Endothelial cell of umbilical vein (primary cell): ENCODE measurements at regions of chr21 and their contacts with region 1.

Region 1: GRCh38 chr21:34888569-34889319 is 160.4 kb downstream of the RUNX1 start:
- DNase-seq: peak; percentile 91
- H3K4me3 ChIP-seq: peak overlapping the region; percentile 59 to 89 (median 80)
- H3K27ac ChIP-seq: peak overlapping the region; percentile 88
- H3K4me1 ChIP-seq: peaks cover 36% of the 10 kb centered on the region
- H3K27me3 ChIP-seq: peaks cover 21 to 36% of the 10 kb centered on the region in 2 experiments
- CTCF ChIP-seq: no peak
- POLR2A ChIP-seq: peak; percentile 99

Region 2: DNA sequence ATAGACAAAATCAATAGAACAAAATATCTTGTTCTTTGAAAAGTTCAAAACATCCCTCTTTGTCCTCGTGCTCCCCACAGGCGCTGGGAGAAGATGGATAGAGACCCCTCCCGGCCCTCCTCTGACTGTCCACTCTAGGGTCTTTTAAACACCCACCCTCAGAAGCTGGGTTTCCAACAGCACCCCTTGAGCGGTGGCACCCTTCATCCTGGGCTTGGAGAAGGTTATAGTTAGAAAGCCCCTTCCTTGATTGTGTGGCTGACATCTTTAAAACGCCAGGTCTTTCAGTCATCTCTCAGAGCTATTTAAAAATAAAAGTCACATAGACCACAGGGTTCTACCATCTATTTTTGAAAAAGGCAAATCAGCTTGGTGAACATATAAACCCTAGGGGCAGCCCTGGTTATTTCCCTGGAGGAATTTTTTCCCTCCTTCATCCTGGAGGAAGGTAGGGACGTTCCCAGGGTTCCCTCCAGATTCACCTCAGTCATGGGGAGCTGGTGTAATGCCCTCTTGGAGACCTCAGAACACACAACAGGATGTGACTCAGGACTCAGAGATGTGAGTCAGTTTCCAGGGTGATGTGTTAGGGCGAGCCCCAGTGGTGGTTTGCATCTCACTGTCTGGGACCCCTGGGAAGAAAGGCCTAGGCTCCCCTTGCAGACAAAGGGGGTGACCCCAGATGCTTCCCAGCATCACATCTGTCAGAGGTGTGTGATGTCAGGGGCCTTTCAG is 81.4 kb before region 1 on chr21:
- CTCF ChIA-PET with region 1: interaction called, 6 read pairs
- POLR2A ChIA-PET with region 1: interaction called, 9 read pairs
- dilution Hi-C with region 1: no loop called
- intact Hi-C with region 1: loop called (anchors 1 kb)
- DNase-seq: peak; percentile 94
- H3K4me3 ChIP-seq: no peak overlapping the region
- H3K27ac ChIP-seq: peak overlapping the region; percentile 100
- H3K4me1 ChIP-seq: peaks cover 37% of the 10 kb centered on the region
- H3K27me3 ChIP-seq: no peaks in the 10 kb centered on the region
- CTCF ChIP-seq: no peak
- POLR2A ChIP-seq: no peak

Region 3: GRCh38 chr21:34912159-34912945 is 23.6 kb after region 1 on chr21:
- CTCF ChIA-PET with region 1: no interaction called
- POLR2A ChIA-PET with region 1: no interaction called
- dilution Hi-C with region 1: no loop called
- intact Hi-C with region 1: no loop called
- DNase-seq: no peak
- H3K4me3 ChIP-seq: no peak overlapping the region
- H3K27ac ChIP-seq: no peak overlapping the region
- H3K4me1 ChIP-seq: no peaks in the 10 kb centered on the region
- H3K27me3 ChIP-seq: peaks cover 32 to 43% of the 10 kb centered on the region in 2 experiments
- CTCF ChIP-seq: no peak
- POLR2A ChIP-seq: no peak

Region 4: GRCh38 chr21:35051287-35051818 is 162.6 kb after region 1 on chr21:
- CTCF ChIA-PET with region 1: interaction called, 27 read pairs
- POLR2A ChIA-PET with region 1: interaction called, 8 read pairs
- dilution Hi-C with region 1: no loop called
- intact Hi-C with region 1: loop called (anchors 1 kb)
- DNase-seq: peak; percentile 72
- H3K4me3 ChIP-seq: no peak overlapping the region
- H3K27ac ChIP-seq: no peak overlapping the region
- H3K4me1 ChIP-seq: peaks cover 43% of the 10 kb centered on the region
- H3K27me3 ChIP-seq: no peaks in the 10 kb centered on the region
- CTCF ChIP-seq: peak; percentile 71 to 74
- POLR2A ChIP-seq: no peak

Region 5: GRCh38 chr21:35375115-35375514 is 486.4 kb after region 1 on chr21:
- CTCF ChIA-PET with region 1: no interaction called
- POLR2A ChIA-PET with region 1: interaction called, 3 read pairs
- dilution Hi-C with region 1: no loop called
- intact Hi-C with region 1: loop called (anchors 1 kb)
- DNase-seq: peak; percentile 66
- H3K4me3 ChIP-seq: no peak overlapping the region
- H3K27ac ChIP-seq: peak overlapping the region; percentile 66
- H3K4me1 ChIP-seq: peaks cover 50% of the 10 kb centered on the region
- H3K27me3 ChIP-seq: no peaks in the 10 kb centered on the region
- CTCF ChIP-seq: no peak
- POLR2A ChIP-seq: peak; percentile 41

Region 6: DNA sequence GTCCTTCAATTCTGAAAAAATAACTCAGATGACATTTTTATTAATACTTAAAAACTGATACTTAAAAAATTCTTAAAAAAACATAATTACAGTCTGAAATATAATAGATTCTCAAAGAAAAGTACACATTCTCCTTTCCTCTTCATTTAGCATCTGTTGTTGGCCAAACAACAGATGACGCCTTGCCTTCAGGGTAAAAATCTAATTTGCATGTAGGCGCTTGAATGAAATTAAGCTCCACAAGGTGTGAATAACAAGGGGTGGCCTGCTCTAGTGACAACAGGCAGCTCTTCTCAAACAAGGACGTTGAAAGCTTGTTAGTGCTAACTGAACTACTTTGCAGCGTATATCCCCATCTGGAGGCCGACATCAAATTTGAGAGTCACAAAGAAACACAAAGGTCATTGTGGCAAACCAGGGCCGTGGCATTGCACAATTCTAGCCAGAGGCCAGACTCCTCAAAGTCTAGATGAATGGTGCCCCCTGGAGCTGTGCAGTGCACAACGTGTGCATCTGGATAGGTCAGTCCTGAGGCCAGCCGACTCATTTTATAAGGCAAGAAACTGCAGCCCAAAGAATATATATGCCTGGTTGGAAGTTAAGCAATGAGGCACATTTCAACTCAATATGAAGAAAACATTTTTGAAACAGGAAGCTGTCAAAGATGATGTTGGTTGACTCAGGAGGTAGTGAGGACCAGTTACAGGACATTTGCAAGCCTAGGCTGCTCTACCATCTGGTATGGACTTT is 619.6 kb after region 1 on chr21:
- CTCF ChIA-PET with region 1: interaction called, 13 read pairs
- POLR2A ChIA-PET with region 1: no interaction called
- dilution Hi-C with region 1: no loop called
- intact Hi-C with region 1: no loop called
- DNase-seq: no peak
- H3K4me3 ChIP-seq: no peak overlapping the region
- H3K27ac ChIP-seq: no peak overlapping the region
- H3K4me1 ChIP-seq: peaks cover 2% of the 10 kb centered on the region
- H3K27me3 ChIP-seq: peaks cover 6 to 14% of the 10 kb centered on the region in 2 experiments
- CTCF ChIP-seq: no peak
- POLR2A ChIP-seq: no peak

Region 7: DNA sequence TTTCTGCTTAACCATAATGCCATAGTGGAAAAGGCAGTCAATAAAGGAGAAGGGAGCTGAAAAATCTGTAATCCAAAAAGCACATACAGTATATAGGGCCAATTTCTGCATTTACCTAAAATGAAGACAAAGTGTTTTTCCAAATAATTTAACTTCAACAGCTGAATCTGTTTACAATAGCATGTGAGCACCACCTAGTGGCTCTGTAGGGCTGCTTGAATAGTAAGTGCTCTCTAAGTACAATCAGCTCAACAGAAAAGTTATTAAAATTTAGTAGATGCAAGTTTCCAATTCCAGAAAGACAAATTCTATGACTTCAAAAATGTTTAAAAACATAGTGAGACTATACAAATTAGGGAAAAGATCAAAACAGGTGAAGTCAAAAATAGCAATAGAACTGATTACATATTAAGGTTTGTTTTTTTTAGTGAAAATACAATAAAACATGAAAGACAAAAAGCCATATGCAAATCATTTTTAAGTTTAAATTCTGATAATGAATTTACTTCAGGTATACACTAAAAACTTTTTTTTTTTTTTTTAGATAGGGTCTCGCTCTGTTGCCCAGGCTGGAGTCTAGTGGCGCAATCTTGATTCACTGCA is 951.6 kb after region 1 on chr21:
- CTCF ChIA-PET with region 1: interaction called, 152 read pairs
- POLR2A ChIA-PET with region 1: no interaction called
- dilution Hi-C with region 1: no loop called
- intact Hi-C with region 1: loop called (anchors 1 kb)
- DNase-seq: peak; percentile 78
- H3K4me3 ChIP-seq: no peak overlapping the region
- H3K27ac ChIP-seq: no peak overlapping the region
- H3K4me1 ChIP-seq: no peaks in the 10 kb centered on the region
- H3K27me3 ChIP-seq: peaks cover 0 to 2% of the 10 kb centered on the region in 2 experiments
- CTCF ChIP-seq: peak; percentile 65 to 71
- POLR2A ChIP-seq: no peak

Region 8: DNA sequence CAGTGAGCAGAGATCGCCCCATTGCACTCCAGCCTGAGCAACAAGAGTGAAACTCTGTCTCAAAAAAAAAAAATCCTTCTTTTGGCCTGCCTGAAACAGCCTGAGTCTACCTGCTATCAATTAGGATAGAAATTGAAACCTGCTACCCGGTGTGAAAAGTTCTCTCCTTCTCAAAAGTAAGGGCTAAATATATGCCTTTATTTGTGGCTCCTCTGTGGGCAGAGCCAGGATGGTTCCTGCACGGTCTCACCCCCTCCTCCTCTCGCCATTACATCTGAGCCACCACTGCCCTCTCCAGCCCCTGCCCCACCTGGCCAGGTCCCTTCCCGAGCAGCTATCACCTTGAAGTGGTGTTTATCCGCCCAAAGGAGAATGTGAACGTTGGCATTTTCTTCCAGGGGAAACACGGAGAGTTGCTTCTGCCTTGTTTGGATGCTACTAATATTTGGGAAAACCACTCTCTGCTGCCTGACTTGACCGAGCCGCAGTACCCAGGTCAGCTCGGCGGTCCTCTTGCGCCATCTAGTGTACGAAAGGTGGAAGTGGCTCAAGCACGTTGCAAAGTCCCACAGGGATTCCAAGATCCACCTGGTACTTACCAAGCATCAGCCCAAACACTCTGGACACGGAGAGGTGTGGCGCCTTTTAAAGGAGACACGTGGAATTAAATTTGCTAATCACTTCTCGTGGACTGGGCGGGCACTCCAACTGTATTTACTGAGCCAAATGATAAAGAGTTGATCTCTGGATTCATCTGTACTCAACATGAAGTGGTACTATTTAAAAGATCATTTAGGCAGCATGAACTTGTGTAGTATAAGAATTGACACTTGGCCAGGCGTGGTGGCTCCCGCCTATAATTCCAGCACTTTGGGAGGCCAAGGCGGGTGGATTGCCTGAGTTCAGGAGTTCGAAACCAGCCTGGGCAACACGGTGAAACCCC is 1139.7 kb after region 1 on chr21:
- CTCF ChIA-PET with region 1: interaction called, 4 read pairs
- POLR2A ChIA-PET with region 1: no interaction called
- dilution Hi-C with region 1: no loop called
- intact Hi-C with region 1: loop called (anchors 1 kb)
- DNase-seq: peak; percentile 73
- H3K4me3 ChIP-seq: no peak overlapping the region
- H3K27ac ChIP-seq: no peak overlapping the region
- H3K4me1 ChIP-seq: no peaks in the 10 kb centered on the region
- H3K27me3 ChIP-seq: peaks cover 0 to 2% of the 10 kb centered on the region in 2 experiments
- CTCF ChIP-seq: peak; percentile 90 to 92
- POLR2A ChIP-seq: no peak